B cell (primary cell): ENCODE measurements at regions of chr7 and their contacts with region 1.

Region 1: GRCh38 chr7:102180727-102181126 is 105.9 kb upstream of the SH2B2 start:
- DNase-seq: no peak
- ATAC-seq: no peak
- H3K4me3 ChIP-seq: no peak overlapping the region
- H3K4me3 Mint-ChIP-seq: no peak overlapping the region
- H3K27ac ChIP-seq: no peak overlapping the region
- H3K27ac Mint-ChIP-seq: no peak overlapping the region
- H3K4me1 ChIP-seq: no peaks in the 10 kb centered on the region
- H3K4me1 Mint-ChIP-seq: no peaks in the 10 kb centered on the region
- H3K27me3 ChIP-seq: no peaks in the 10 kb centered on the region
- H3K27me3 Mint-ChIP-seq: no peaks in the 10 kb centered on the region
- CTCF ChIP-seq: no peak

Region 2: GRCh38 chr7:102193806-102194205 is 13.1 kb after region 1 on chr7:
- CTCF ChIA-PET with region 1: no interaction called
- POLR2A ChIA-PET with region 1: no interaction called
- intact Hi-C with region 1: loop called (anchors 1 kb)
- DNase-seq: no peak
- ATAC-seq: no peak
- H3K4me3 ChIP-seq: no peak overlapping the region
- H3K4me3 Mint-ChIP-seq: no peak overlapping the region
- H3K27ac ChIP-seq: no peak overlapping the region
- H3K27ac Mint-ChIP-seq: no peak overlapping the region
- H3K4me1 ChIP-seq: no peaks in the 10 kb centered on the region
- H3K4me1 Mint-ChIP-seq: no peaks in the 10 kb centered on the region
- H3K27me3 ChIP-seq: no peaks in the 10 kb centered on the region
- H3K27me3 Mint-ChIP-seq: no peaks in the 10 kb centered on the region
- CTCF ChIP-seq: no peak